Activated CD4-positive, alpha-beta T cell treated with anti-CD3 and anti-CD28 coated beads, Interleukin-2, amount 10 ng/mL, durations not matched to agents 24 days and 14 days (primary cell): ENCODE measurements at regions of chr14 and their contacts with region 1.

Region 1: DNA sequence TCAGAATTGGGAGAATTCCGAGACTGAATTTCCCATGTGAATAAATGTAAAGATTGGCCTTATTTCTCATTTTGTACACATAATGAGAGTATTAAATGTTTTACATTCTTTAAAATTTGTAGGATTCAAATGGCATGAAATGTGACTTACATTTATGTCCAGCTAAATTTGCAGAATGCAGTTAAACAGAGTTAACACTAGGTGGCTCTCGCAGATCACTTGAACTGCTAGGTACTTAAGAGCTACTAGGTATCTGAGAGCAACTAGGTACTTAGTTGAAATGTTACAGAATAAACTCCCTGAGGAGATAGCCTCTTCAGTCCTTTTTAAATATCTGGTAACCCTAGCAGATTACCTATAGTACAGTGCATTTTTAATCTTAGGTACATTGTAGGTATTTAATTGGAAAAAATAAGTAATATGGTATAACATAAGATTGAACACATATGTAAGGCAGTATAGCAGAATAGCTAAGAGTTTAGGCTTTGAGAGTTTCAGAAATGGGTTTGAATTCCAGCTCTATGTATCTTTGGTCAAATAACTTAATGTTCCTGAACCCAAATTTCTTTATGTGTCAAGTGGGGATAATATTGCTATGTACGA is 73.8 kb downstream of the KIAA0586 start:
- DNase-seq: peak; percentile 79
- H3K4me3 Mint-ChIP-seq: no peak overlapping the region
- H3K27ac Mint-ChIP-seq: no peak overlapping the region
- H3K4me1 Mint-ChIP-seq: no peaks in the 10 kb centered on the region
- H3K27me3 Mint-ChIP-seq: no peaks in the 10 kb centered on the region

Region 2: GRCh38 chr14:58414845-58415244 is 86.5 kb before region 1 on chr14:
- intact Hi-C with region 1: no loop called
- DNase-seq: no peak
- H3K4me3 Mint-ChIP-seq: no peak overlapping the region
- H3K27ac Mint-ChIP-seq: no peak overlapping the region
- H3K4me1 Mint-ChIP-seq: peaks cover 18% of the 10 kb centered on the region
- H3K27me3 Mint-ChIP-seq: no peaks in the 10 kb centered on the region

Region 3: GRCh38 chr14:58571769-58572472 is 70.6 kb after region 1 on chr14:
- intact Hi-C with region 1: loop called (anchors 10 kb)
- DNase-seq: peak; percentile 78
- H3K4me3 Mint-ChIP-seq: peak overlapping the region; percentile 68
- H3K27ac Mint-ChIP-seq: peak overlapping the region; percentile 84
- H3K4me1 Mint-ChIP-seq: peaks cover 28% of the 10 kb centered on the region
- H3K27me3 Mint-ChIP-seq: no peaks in the 10 kb centered on the region

Region 4: GRCh38 chr14:58826845-58827686 is 325.8 kb after region 1 on chr14:
- intact Hi-C with region 1: loop called (anchors 10 kb)
- DNase-seq: no peak
- H3K4me3 Mint-ChIP-seq: no peak overlapping the region
- H3K27ac Mint-ChIP-seq: no peak overlapping the region
- H3K4me1 Mint-ChIP-seq: peaks cover 9% of the 10 kb centered on the region
- H3K27me3 Mint-ChIP-seq: no peaks in the 10 kb centered on the region

Region 5: GRCh38 chr14:59055439-59056045 is 554.2 kb after region 1 on chr14:
- intact Hi-C with region 1: loop called (anchors 1 kb)
- DNase-seq: peak; percentile 77
- H3K4me3 Mint-ChIP-seq: no peak overlapping the region
- H3K27ac Mint-ChIP-seq: no peak overlapping the region
- H3K4me1 Mint-ChIP-seq: no peaks in the 10 kb centered on the region
- H3K27me3 Mint-ChIP-seq: peaks cover 2% of the 10 kb centered on the region

Region 6: GRCh38 chr14:59126710-59127432 is 625.6 kb after region 1 on chr14:
- intact Hi-C with region 1: loop called (anchors 5 kb)
- DNase-seq: peak; percentile 75
- H3K4me3 Mint-ChIP-seq: no peak overlapping the region
- H3K27ac Mint-ChIP-seq: no peak overlapping the region
- H3K4me1 Mint-ChIP-seq: no peaks in the 10 kb centered on the region
- H3K27me3 Mint-ChIP-seq: peaks cover 23% of the 10 kb centered on the region

Region 7: GRCh38 chr14:59439256-59439965 is 938.1 kb after region 1 on chr14:
- intact Hi-C with region 1: loop called (anchors 1 kb)
- DNase-seq: no peak
- H3K4me3 Mint-ChIP-seq: no peak overlapping the region
- H3K27ac Mint-ChIP-seq: no peak overlapping the region
- H3K4me1 Mint-ChIP-seq: no peaks in the 10 kb centered on the region
- H3K27me3 Mint-ChIP-seq: peaks cover 4% of the 10 kb centered on the region